Heart left ventricle (tissue), 16 donors: ENCODE measurements at regions of chr15 and their contacts with region 1.

Region 1: DNA sequence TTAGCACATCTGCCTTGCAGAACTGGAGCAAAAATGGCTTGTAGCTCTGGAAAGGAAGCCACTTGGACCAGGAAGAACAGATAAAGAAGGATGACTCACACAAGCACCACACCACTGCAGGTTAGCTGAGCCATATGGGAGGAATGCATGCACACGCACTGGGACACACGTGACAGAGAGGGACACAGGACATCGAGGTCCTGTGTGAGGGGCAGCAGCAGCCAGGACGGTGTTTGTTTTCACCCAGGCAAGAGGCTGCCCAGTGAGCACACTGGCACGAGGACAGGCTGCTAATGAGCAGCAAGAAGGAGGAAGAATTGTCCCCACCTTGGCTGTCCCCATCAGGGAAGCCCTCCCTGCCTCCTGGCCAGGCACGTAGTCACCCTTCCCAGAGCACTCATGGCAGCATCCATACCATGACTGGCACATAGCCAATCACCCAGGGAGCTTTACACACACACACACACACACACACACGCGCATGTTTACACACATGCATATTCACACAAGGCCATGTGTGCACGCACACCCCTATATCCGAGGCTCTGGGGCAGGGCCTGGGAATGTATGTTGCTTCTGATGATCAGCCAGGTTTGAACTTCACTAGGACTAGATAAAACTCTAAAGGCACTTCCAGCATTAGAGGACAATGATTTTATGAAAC is 24.0 kb upstream of the SPTBN5 start:
- DNase-seq: peak in 2 of 5 donors; percentile 68 to 70
- ATAC-seq: peak; percentile 23 to 64 (median 45)
- H3K4me3 ChIP-seq: no peak overlapping the region
- H3K27ac ChIP-seq: peak overlapping the region; percentile 42 to 93 (median 83)
- H3K4me1 ChIP-seq: peaks cover 27 to 100% (median 94%) of the 10 kb centered on the region in 12 donors
- H3K27me3 ChIP-seq: no peaks in the 10 kb centered on the region
- CTCF ChIP-seq: no peak
- POLR2A ChIP-seq: no peak

Region 2: GRCh38 chr15:41849861-41850260 is 68.0 kb before region 1 on chr15:
- intact Hi-C with region 1: no loop called
- DNase-seq: no peak
- ATAC-seq: no peak
- H3K4me3 ChIP-seq: no peak overlapping the region
- H3K27ac ChIP-seq: no peak overlapping the region
- H3K4me1 ChIP-seq: no peaks in the 10 kb centered on the region
- H3K27me3 ChIP-seq: no peaks in the 10 kb centered on the region
- CTCF ChIP-seq: no peak
- POLR2A ChIP-seq: no peak

Region 3: DNA sequence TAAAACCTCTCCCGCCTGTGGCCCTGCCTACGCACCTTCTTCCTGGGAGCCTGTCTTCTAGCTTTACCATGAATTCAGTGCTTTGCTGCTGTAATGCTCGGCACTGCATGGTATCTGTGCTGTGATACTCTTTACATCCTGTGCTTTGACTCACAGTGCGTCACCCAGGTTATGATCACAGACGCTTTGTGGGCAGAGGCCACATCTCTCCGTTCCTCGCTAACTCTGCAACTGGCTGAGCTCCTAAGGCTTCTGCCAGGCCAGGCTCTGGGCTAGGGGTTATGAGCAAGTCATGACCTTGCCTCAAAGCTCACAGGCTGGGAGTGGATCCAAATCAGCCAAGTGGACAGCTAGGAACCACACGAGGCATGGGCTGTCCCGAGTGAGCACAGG is 47.2 kb before region 1 on chr15:
- intact Hi-C with region 1: no loop called
- DNase-seq: peak in 1 of 5 donors; percentile 74
- ATAC-seq: peak; percentile 26 to 58 (median 47)
- H3K4me3 ChIP-seq: no peak overlapping the region
- H3K27ac ChIP-seq: no peak overlapping the region
- H3K4me1 ChIP-seq: peaks cover 0 to 11% (median 0%) of the 10 kb centered on the region in 12 donors
- H3K27me3 ChIP-seq: no peaks in the 10 kb centered on the region
- CTCF ChIP-seq: no peak
- POLR2A ChIP-seq: no peak

Region 4: GRCh38 chr15:41949401-41950126 is 31.7 kb after region 1 on chr15:
- intact Hi-C with region 1: loop called in 1 of 10 experiments (anchors 5 kb)
- DNase-seq: no peak
- ATAC-seq: no peak
- H3K4me3 ChIP-seq: no peak overlapping the region
- H3K27ac ChIP-seq: peak overlapping the region in 11 of 12 donors; percentile 8 to 85 (median 76)
- H3K4me1 ChIP-seq: peaks cover 15 to 88% (median 76%) of the 10 kb centered on the region in 12 donors
- H3K27me3 ChIP-seq: no peaks in the 10 kb centered on the region
- CTCF ChIP-seq: no peak
- POLR2A ChIP-seq: no peak

Region 5: DNA sequence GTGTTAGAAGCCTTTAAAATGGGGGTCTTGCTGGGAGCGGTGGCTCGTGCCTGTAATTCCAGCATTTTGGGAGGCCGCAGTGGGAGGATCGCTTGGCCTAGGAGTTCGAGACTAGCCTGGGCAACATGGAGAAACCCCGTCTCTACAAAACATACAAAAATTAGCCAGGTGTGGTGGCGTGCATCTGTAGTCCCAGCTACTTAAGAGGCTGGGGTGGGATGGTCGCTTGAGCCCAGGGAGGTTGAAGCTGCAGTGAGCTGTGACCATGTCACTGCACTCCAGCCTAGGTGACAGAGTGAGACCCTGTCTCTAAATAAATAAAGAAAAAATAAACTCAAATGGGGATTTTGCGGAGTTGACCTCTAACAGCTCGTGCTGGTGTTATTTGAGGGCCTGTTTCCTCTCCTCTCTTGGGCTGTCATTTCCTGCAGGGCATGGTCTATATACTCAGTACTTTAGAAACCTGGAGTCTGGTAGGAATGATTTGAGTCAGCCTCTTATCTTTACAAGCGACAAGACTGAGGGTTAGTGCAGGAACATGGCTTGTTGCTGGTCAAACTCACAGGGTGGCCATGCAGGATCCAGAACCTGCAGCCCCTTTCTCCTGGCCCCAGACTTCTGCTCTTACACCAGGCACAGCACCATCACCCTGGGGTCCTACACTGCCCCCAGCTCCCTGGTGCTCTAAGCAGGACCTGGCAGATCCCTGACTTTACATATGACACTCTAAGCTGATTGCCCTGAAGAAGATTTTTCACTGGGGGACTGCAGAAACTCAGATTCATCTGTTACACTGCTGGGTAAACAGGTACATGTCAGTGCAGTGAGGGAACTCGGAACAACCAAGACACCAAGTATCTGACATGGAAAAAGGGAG is 39.4 kb after region 1 on chr15:
- intact Hi-C with region 1: loop called in 3 of 10 experiments (anchors 5 to 10 kb)
- DNase-seq: no peak
- ATAC-seq: peak in 3 of 4 donors; percentile 57 to 71 (median 70)
- H3K4me3 ChIP-seq: no peak overlapping the region
- H3K27ac ChIP-seq: peak overlapping the region in 11 of 12 donors; percentile 20 to 82 (median 66)
- H3K4me1 ChIP-seq: peaks cover 13 to 75% (median 60%) of the 10 kb centered on the region in 12 donors
- H3K27me3 ChIP-seq: no peaks in the 10 kb centered on the region
- CTCF ChIP-seq: no peak
- POLR2A ChIP-seq: no peak